ENCODE measurements at regions of chr20 and their contacts with region 1.

Region 1: GRCh38 chr20:56400090-56400542 is 7.7 kb downstream of the CSTF1 start:
- DNase-seq: peak in 1 of 2 experiments; percentile 34
- H3K4me3 ChIP-seq: no peak overlapping the region
- H3K27ac ChIP-seq: no peak overlapping the region
- H3K4me1 ChIP-seq: no peaks in the 10 kb centered on the region
- H3K27me3 ChIP-seq: no peaks in the 10 kb centered on the region
- CTCF ChIP-seq: peak; percentile 95

Region 2: GRCh38 chr20:56257604-56258003 is 142.5 kb before region 1 on chr20:
- CTCF ChIA-PET with region 1: no interaction called
- POLR2A ChIA-PET with region 1: no interaction called
- intact Hi-C with region 1: no loop called
- DNase-seq: no peak
- H3K4me3 ChIP-seq: no peak overlapping the region
- H3K27ac ChIP-seq: no peak overlapping the region
- H3K4me1 ChIP-seq: no peaks in the 10 kb centered on the region
- H3K27me3 ChIP-seq: peaks cover 66% of the 10 kb centered on the region
- CTCF ChIP-seq: no peak

Region 3: GRCh38 chr20:56322681-56323080 is 77.4 kb before region 1 on chr20:
- CTCF ChIA-PET with region 1: no interaction called
- POLR2A ChIA-PET with region 1: no interaction called
- intact Hi-C with region 1: no loop called
- DNase-seq: no peak
- H3K4me3 ChIP-seq: no peak overlapping the region
- H3K27ac ChIP-seq: no peak overlapping the region
- H3K4me1 ChIP-seq: no peaks in the 10 kb centered on the region
- H3K27me3 ChIP-seq: peaks cover 69% of the 10 kb centered on the region
- CTCF ChIP-seq: no peak

Region 4: GRCh38 chr20:56468316-56469082 is 68.4 kb after region 1 on chr20 and contains the start of gene RTF2:
- CTCF ChIA-PET with region 1: no interaction called
- POLR2A ChIA-PET with region 1: no interaction called
- intact Hi-C with region 1: loop called (anchors 2 kb)
- DNase-seq: peak; percentile 84 to 96
- H3K4me3 ChIP-seq: peak within 1 kb of the TSS; percentile 86
- H3K27ac ChIP-seq: 0 out of 2 replicates have a peak within 1 kb of the TSS, but pooled peaks have one; percentile 16
- H3K4me1 ChIP-seq: peaks cover 17% of the 10 kb centered on the region
- H3K27me3 ChIP-seq: no peaks in the 10 kb centered on the region; the same call in 1 of the 2 replicates
- CTCF ChIP-seq: no peak
- total RNA-seq, gene RTF2: 96.2 and 108 TPM in 2 replicates

Region 5: DNA sequence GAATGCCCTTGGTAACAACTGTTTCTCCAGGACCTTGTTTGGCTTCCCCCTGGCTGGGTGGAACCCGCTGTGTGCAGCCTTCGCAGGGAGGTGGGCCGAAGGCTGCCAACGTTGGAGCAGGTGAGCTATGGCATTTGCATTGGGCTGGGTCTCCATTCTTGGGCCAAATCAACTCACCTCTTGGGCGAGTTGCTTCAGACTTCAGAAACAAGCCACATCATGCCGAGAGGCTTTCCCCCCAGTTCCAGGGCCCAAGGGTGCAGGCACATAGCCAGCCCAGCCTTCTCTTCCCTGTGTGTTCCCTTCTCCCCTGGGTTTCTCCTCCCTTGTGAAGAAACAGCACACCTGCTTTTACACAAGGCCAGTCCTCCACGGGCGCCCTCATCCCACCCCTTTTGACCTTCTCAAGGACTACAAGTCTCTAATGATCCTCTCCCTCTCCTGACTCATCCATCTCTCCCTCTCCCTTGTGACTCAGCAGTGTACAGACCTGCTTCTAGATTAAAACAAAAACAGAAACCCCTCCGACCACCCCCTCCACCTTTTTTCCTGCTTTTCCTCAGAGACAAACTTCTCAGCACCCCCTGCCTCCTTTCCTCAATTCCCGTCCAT is 174.5 kb after region 1 on chr20:
- CTCF ChIA-PET with region 1: no interaction called
- POLR2A ChIA-PET with region 1: no interaction called
- intact Hi-C with region 1: loop called (anchors 1 kb)
- DNase-seq: no peak
- H3K4me3 ChIP-seq: no peak overlapping the region
- H3K27ac ChIP-seq: no peak overlapping the region
- H3K4me1 ChIP-seq: peaks cover 12% of the 10 kb centered on the region
- H3K27me3 ChIP-seq: no peaks in the 10 kb centered on the region
- CTCF ChIP-seq: no peak

Region 6: DNA sequence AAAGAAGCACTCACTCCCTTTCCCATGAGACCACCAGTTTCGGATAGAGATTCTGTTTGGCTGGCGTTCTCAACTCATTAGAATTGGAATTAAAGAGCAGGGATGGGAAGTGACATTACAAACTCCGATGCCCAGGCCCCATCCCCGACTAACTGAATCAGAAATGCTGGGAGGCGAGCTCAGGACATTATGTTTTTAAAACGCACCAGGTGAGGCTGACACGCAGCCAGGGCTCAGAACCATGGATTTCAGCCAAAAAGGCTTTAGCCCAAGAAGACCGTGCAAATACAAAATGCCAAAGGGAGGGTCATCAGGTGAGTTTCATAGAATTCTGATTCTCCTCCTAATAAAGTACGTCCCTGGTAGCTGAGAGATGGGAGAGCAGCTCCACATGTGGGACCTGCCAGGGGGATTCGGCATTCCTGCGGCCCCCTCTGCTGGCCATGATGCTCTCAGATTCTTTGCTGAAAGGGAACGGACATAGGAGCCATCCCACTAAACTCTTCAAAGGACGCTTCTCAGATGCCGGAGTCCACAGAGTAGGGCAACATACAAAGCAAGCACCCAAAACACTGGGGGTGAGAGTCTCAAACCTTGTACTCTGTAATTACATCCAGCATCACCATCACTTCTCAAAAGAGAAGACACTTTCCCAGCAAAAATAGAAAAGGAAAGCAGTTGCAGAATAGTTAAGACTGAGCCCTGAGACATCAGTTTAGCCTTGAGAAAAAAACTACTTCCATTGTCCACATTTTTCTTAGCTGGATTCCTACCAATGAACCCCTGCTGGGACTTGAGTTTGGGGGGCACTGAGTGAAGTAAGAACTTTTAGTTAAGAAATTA is 661.2 kb after region 1 on chr20:
- CTCF ChIA-PET with region 1: no interaction called
- POLR2A ChIA-PET with region 1: no interaction called
- intact Hi-C with region 1: loop called (anchors 10 kb)
- DNase-seq: peak in 1 of 2 experiments; percentile 23
- H3K4me3 ChIP-seq: no peak overlapping the region
- H3K27ac ChIP-seq: peak overlapping the region; percentile 53
- H3K4me1 ChIP-seq: peaks cover 39% of the 10 kb centered on the region
- H3K27me3 ChIP-seq: no peaks in the 10 kb centered on the region
- CTCF ChIP-seq: peak; percentile 54; the same call in 1 of the 2 replicates